Prostate gland (tissue), 2 donors: ENCODE measurements at regions of chr3 and their contacts with region 1.

Region 1: GRCh38 chr3:70716832-70717231 is 404.4 kb upstream of the MDFIC2 start:
- DNase-seq: peak; percentile 25
- H3K4me3 ChIP-seq: no peak overlapping the region
- H3K27ac ChIP-seq: no peak overlapping the region
- H3K4me1 ChIP-seq: no peaks in the 10 kb centered on the region
- H3K27me3 ChIP-seq: no peaks in the 10 kb centered on the region
- CTCF ChIP-seq: peak in 3 of 4 experiments; percentile 45 to 70 (median 53)
- POLR2A ChIP-seq: no peak

Region 2: DNA sequence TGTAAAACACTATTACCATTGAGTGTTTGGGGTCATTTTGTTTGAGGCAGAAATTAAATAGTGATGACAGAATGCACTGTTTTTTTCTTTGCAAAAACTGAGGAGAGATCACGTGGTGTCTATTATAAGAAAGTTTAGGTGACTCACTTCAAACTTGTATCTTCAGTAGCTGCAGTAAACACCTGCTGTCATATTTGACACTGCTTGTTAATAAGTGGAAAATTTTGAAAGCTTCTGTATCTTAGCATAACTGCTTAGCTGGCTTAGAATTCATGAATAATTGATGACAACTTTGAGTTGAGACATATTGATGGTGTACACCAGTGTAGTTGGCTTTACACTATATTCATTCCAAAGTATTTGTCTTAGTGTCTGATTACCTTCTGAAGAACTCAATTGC is 374.7 kb before region 1 on chr3:
- intact Hi-C with region 1: no loop called
- DNase-seq: no peak
- H3K4me3 ChIP-seq: no peak overlapping the region
- H3K27ac ChIP-seq: no peak overlapping the region
- H3K4me1 ChIP-seq: no peaks in the 10 kb centered on the region
- H3K27me3 ChIP-seq: no peaks in the 10 kb centered on the region
- CTCF ChIP-seq: no peak
- POLR2A ChIP-seq: no peak

Region 3: DNA sequence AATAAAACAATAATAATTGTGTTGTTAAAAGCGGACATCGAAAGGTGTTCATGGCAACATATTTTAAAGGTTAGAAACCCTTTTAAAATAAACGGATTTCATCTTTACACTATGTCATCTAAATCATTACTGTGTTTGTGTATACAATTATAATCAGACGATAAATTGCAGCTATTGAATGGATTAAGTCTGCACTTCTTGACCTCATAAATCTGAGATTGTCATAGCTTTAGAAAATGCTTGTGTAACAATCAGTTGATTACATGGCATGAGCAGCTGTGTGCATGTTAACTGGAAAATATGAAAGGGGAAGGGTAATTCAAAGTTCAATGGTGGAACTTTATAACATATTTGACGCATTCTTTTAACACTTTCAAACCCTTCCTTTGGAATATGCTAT is 252.0 kb before region 1 on chr3:
- intact Hi-C with region 1: no loop called
- DNase-seq: no peak
- H3K4me3 ChIP-seq: no peak overlapping the region
- H3K27ac ChIP-seq: no peak overlapping the region
- H3K4me1 ChIP-seq: no peaks in the 10 kb centered on the region
- H3K27me3 ChIP-seq: no peaks in the 10 kb centered on the region
- CTCF ChIP-seq: no peak
- POLR2A ChIP-seq: no peak

Region 4: GRCh38 chr3:70840106-70840875 is 123.5 kb after region 1 on chr3:
- intact Hi-C with region 1: no loop called
- DNase-seq: no peak
- H3K4me3 ChIP-seq: no peak overlapping the region
- H3K27ac ChIP-seq: no peak overlapping the region
- H3K4me1 ChIP-seq: no peaks in the 10 kb centered on the region
- H3K27me3 ChIP-seq: no peaks in the 10 kb centered on the region
- CTCF ChIP-seq: no peak
- POLR2A ChIP-seq: no peak

Region 5: DNA sequence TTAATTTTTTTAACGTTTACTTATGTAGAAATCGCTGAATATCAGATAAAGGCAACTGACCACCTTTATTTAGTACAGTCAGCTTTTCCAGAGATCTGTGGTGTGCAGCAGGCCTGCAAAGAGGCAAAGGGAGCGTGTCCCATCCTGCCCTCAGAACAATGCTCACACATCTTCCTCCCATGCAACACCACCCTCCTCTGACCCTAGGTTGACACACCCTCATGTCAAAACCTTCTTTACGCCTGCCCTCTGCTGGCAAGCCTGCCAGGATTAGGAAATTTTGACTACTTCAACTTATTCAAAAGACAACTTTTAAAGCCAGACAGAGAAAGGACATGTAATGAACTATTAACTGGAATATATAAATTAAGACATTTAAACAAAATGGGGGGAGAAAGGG is 353.0 kb after region 1 on chr3:
- intact Hi-C with region 1: loop called (anchors 5 kb)
- DNase-seq: peak; percentile 86
- H3K4me3 ChIP-seq: no peak overlapping the region
- H3K27ac ChIP-seq: peak overlapping the region; percentile 59 to 96
- H3K4me1 ChIP-seq: peaks cover 9% of the 10 kb centered on the region
- H3K27me3 ChIP-seq: no peaks in the 10 kb centered on the region
- CTCF ChIP-seq: peak; percentile 18 to 69 (median 58)
- POLR2A ChIP-seq: no peak

Region 6: DNA sequence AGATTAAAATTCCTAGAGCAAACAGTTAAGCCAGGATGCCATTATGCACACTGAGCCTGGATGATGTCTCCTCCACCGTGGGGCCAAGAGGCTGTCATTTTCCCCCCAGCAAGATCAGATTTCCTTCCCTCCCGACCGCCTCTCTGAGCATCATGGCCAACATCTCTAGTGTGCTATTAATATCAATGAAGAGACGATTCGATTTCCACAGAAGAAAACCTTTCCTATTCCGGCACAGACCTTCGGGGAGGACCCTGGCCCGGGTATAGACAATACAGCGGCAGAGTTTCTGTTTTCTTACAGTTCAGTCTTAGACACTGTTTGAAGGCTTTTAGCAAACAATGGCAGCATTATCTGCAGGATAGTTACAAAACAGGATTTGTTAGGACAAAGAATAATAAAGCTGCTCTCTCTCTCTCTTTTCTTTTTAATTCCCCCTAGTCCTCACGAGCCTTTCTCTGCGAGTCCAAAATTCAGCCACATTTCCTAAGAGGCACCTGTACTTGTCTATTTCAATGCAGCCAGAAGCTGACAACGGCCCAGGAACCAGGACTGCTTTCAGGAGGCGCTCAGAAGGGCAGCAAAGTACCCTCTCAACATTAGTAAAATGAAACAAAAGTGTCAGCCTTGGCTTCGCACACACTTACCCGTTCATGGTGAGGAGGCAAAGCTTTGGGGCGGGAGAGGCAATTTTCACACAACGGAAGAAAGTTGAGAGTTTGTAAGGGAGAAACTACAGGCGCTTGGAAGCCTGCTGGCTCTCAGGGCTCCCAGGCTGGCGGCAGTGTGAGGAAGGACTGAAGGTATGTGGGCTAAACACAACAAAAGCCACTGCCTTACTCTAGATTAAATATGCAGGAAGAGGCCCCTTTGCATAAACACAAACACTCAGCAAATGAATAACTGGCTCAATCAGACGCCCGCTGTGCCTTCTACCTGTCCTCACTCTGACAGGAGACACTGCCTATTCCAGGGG is 588.7 kb after region 1 on chr3:
- intact Hi-C with region 1: loop called (anchors 5 kb)
- DNase-seq: peak; percentile 35
- H3K4me3 ChIP-seq: peak overlapping the region; percentile 15 to 28
- H3K27ac ChIP-seq: peak overlapping the region; percentile 80 to 83
- H3K4me1 ChIP-seq: no peaks in the 10 kb centered on the region
- H3K27me3 ChIP-seq: no peaks in the 10 kb centered on the region
- CTCF ChIP-seq: no peak
- POLR2A ChIP-seq: no peak